CD8-positive, alpha-beta T cell (primary cell): ENCODE measurements at regions of chr6 and their contacts with region 1.

Region 1: DNA sequence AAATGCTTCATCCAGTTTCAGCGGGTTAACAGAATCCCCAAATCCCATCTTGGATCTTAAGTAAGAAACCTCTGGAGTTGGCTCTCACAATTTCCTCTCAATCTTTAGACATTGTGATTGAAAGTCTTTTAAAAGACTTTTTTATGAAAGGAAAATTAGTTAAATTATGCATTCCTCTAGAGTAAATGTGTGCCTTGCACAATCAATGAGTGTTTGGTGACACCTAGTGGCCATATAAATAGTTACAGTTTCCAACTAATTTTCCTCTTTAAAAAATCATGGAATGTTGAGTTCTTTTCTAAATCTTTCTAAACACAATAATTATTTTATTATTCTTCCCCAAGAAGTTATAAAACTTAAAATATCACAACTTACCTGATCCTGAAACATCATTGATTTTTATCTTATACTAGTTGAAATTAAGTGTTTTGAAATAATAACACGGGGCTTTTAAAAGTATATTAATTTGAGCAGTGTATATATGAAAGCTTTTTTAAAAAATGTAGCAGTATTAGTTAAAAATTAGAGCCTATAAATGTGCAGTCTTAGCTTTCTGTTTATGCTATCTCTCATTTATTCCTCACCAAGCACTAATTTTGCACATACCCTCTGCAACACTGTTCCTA is 66.4 kb downstream of the PKHD1 start:
- DNase-seq: peak in 2 of 9 experiments; percentile 20 to 29
- ATAC-seq: no peak
- H3K4me3 ChIP-seq: no peak overlapping the region
- H3K4me3 Mint-ChIP-seq: no peak overlapping the region
- H3K27ac ChIP-seq: no peak overlapping the region
- H3K27ac Mint-ChIP-seq: no peak overlapping the region
- H3K4me1 ChIP-seq: no peaks in the 10 kb centered on the region
- H3K4me1 Mint-ChIP-seq: no peaks in the 10 kb centered on the region
- H3K27me3 ChIP-seq: no peaks in the 10 kb centered on the region
- H3K27me3 Mint-ChIP-seq: peaks cover 16% of the 10 kb centered on the region
- CTCF ChIP-seq: peak; percentile 83

Region 2: DNA sequence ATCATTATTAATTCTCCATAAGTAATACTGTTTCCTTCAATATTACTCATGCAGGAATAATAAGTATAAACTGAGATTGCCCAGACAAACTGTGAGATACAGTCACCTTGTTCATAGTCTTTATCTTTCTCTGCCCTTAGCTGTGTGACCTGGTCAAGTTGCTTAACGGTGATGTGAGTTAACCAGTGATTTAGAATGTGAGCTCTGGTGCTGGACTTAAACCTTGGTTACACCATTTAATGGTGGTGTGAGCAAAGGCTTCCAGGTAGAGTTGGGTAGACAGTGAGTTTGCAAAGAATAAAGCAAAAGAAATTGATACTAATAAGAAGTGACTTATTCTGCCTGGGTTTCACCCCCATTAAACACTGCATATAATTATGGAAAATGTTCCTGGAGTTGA is 1885.1 kb before region 1 on chr6:
- CTCF ChIA-PET with region 1: no interaction called
- POLR2A ChIA-PET with region 1: no interaction called
- intact Hi-C with region 1: loop called in 1 of 2 experiments (anchors 10 kb)
- DNase-seq: no peak
- ATAC-seq: no peak
- H3K4me3 ChIP-seq: no peak overlapping the region
- H3K4me3 Mint-ChIP-seq: no peak overlapping the region
- H3K27ac ChIP-seq: no peak overlapping the region
- H3K27ac Mint-ChIP-seq: no peak overlapping the region
- H3K4me1 ChIP-seq: no peaks in the 10 kb centered on the region
- H3K4me1 Mint-ChIP-seq: no peaks in the 10 kb centered on the region
- H3K27me3 ChIP-seq: no peaks in the 10 kb centered on the region
- H3K27me3 Mint-ChIP-seq: no peaks in the 10 kb centered on the region
- CTCF ChIP-seq: no peak

Region 3: GRCh38 chr6:50816115-50816675 is 1204.9 kb before region 1 on chr6:
- CTCF ChIA-PET with region 1: interaction called, 3 read pairs
- POLR2A ChIA-PET with region 1: no interaction called
- intact Hi-C with region 1: loop called (anchors 2 to 5 kb)
- DNase-seq: peak in 8 of 9 experiments; percentile 19 to 54 (median 38)
- ATAC-seq: no peak
- H3K4me3 ChIP-seq: peak overlapping the region; percentile 24 to 39
- H3K4me3 Mint-ChIP-seq: peak overlapping the region; percentile 82
- H3K27ac ChIP-seq: no peak overlapping the region
- H3K27ac Mint-ChIP-seq: no peak overlapping the region
- H3K4me1 ChIP-seq: no peaks in the 10 kb centered on the region
- H3K4me1 Mint-ChIP-seq: peaks cover 19% of the 10 kb centered on the region
- H3K27me3 ChIP-seq: peaks cover 6 to 9% of the 10 kb centered on the region in 2 experiments
- H3K27me3 Mint-ChIP-seq: peaks cover 59% of the 10 kb centered on the region
- CTCF ChIP-seq: peak; percentile 55

Region 4: DNA sequence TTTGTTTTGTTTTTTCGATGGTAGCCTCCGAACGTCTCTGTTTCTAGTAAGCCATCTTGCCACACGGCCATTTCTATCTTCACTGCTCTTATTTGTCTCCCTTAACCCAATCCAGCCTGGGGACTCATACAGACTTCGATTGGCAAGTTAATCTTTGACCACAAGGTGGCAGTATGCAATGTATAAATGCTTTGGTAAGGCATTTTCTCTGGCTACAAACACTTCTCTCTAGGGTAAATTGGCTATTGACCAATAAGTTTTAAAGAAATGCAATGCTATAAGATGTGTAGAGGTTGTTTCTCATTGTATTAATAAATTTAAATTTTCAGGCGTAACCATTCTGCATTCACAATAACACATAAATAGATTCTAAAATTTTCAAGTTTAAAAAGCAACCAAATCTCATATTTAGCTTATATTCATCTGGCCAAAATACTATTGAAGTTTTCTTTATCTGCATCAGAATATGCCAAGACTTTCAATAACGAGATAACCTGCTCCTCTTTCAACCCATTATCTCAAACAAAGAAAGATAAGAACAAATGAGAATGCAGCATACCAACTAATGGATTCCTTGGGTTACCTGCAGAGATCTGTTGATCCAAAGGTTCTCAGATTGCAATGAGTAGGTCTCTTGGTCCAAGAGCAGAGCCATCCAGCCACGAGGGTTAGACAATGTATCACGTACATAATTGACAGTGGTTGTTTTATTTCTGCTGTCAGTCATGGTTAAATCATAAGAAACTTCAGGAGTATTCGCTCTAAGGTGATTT is 165.6 kb before region 1 on chr6:
- CTCF ChIA-PET with region 1: interaction called, 4 read pairs
- POLR2A ChIA-PET with region 1: no interaction called
- intact Hi-C with region 1: loop called in 1 of 2 experiments (anchors 2 kb)
- DNase-seq: peak in 2 of 9 experiments; percentile 28 to 49
- ATAC-seq: no peak
- H3K4me3 ChIP-seq: no peak overlapping the region
- H3K4me3 Mint-ChIP-seq: no peak overlapping the region
- H3K27ac ChIP-seq: no peak overlapping the region
- H3K27ac Mint-ChIP-seq: no peak overlapping the region
- H3K4me1 ChIP-seq: no peaks in the 10 kb centered on the region
- H3K4me1 Mint-ChIP-seq: no peaks in the 10 kb centered on the region
- H3K27me3 ChIP-seq: no peaks in the 10 kb centered on the region
- H3K27me3 Mint-ChIP-seq: peaks cover 8% of the 10 kb centered on the region
- CTCF ChIP-seq: peak; percentile 65

Region 5: DNA sequence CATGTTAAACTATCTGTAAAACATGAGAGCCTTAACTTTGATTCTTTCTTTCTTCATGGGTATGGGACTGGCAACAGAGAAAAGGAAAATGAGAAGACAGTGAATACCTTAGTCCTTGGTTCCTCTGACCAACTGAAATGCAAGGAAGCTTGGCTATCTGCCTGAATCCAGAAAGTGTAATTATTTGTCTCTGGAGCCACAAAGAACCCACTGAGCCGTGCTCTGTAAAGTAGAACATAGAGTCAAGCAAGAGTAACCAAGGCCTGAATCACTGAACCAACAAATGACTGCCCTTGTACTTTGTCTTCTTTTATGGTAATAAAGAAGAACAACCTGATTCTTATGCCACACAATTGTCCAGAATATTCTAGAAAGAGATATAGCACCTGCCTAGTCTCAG is 38.8 kb after region 1 on chr6:
- CTCF ChIA-PET with region 1: no interaction called
- POLR2A ChIA-PET with region 1: no interaction called
- intact Hi-C with region 1: no loop called
- DNase-seq: no peak
- ATAC-seq: no peak
- H3K4me3 ChIP-seq: no peak overlapping the region
- H3K4me3 Mint-ChIP-seq: no peak overlapping the region
- H3K27ac ChIP-seq: no peak overlapping the region
- H3K27ac Mint-ChIP-seq: no peak overlapping the region
- H3K4me1 ChIP-seq: peaks cover 13% of the 10 kb centered on the region
- H3K4me1 Mint-ChIP-seq: peaks cover 11% of the 10 kb centered on the region
- H3K27me3 ChIP-seq: no peaks in the 10 kb centered on the region
- H3K27me3 Mint-ChIP-seq: peaks cover 6% of the 10 kb centered on the region
- CTCF ChIP-seq: no peak

Region 6: DNA sequence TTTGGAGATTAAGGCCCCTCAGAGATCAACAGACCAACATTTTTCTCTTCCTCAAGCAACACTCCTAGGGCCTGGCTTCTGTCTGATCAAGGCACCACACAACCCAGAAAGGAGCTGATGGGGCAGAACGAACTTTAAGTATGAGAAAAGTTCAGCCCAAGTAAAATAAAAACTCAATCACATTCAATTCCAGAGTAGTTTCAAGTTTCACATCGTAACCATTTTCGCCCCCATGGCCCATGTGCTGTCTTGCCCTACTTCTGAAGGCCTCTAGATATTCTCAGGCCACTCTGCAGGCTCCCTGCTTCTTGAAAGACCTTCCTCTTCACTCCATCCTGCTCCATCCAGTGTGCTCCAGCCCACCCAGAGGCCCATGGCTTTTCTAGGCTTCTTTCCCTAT is 169.4 kb after region 1 on chr6:
- CTCF ChIA-PET with region 1: no interaction called
- POLR2A ChIA-PET with region 1: no interaction called
- intact Hi-C with region 1: no loop called
- DNase-seq: no peak
- ATAC-seq: no peak
- H3K4me3 ChIP-seq: no peak overlapping the region
- H3K4me3 Mint-ChIP-seq: no peak overlapping the region
- H3K27ac ChIP-seq: no peak overlapping the region
- H3K27ac Mint-ChIP-seq: no peak overlapping the region
- H3K4me1 ChIP-seq: no peaks in the 10 kb centered on the region
- H3K4me1 Mint-ChIP-seq: no peaks in the 10 kb centered on the region
- H3K27me3 ChIP-seq: no peaks in the 10 kb centered on the region
- H3K27me3 Mint-ChIP-seq: peaks cover 25% of the 10 kb centered on the region
- CTCF ChIP-seq: no peak